ENCODE measurements at regions of chr6 and their contacts with region 1.

Region 1: GRCh38 chr6:54288474-54288873 is 19.8 kb upstream of the TINAG start:
- DNase-seq: no peak
- ATAC-seq: no peak
- H3K4me3 ChIP-seq: no peak overlapping the region
- H3K27ac ChIP-seq: no peak overlapping the region
- H3K4me1 ChIP-seq: peaks cover 0 to 6% (median 0%) of the 10 kb centered on the region in 9 donors
- H3K27me3 ChIP-seq: no peaks in the 10 kb centered on the region
- CTCF ChIP-seq: no peak

Region 2: GRCh38 chr6:54267798-54268197 is 20.7 kb before region 1 on chr6:
- intact Hi-C with region 1: loop called in 1 of 10 experiments (anchors 1 kb)
- DNase-seq: no peak
- ATAC-seq: no peak
- H3K4me3 ChIP-seq: no peak overlapping the region
- H3K27ac ChIP-seq: no peak overlapping the region
- H3K4me1 ChIP-seq: peaks cover 0 to 9% (median 0%) of the 10 kb centered on the region in 9 donors
- H3K27me3 ChIP-seq: no peaks in the 10 kb centered on the region
- CTCF ChIP-seq: peak in 7 of 9 donors; percentile 27 to 52 (median 38)

Measured in heart right ventricle (tissue), 16 donors.